ENCODE measurements at regions of chr3 and their contacts with region 1.

Region 1: DNA sequence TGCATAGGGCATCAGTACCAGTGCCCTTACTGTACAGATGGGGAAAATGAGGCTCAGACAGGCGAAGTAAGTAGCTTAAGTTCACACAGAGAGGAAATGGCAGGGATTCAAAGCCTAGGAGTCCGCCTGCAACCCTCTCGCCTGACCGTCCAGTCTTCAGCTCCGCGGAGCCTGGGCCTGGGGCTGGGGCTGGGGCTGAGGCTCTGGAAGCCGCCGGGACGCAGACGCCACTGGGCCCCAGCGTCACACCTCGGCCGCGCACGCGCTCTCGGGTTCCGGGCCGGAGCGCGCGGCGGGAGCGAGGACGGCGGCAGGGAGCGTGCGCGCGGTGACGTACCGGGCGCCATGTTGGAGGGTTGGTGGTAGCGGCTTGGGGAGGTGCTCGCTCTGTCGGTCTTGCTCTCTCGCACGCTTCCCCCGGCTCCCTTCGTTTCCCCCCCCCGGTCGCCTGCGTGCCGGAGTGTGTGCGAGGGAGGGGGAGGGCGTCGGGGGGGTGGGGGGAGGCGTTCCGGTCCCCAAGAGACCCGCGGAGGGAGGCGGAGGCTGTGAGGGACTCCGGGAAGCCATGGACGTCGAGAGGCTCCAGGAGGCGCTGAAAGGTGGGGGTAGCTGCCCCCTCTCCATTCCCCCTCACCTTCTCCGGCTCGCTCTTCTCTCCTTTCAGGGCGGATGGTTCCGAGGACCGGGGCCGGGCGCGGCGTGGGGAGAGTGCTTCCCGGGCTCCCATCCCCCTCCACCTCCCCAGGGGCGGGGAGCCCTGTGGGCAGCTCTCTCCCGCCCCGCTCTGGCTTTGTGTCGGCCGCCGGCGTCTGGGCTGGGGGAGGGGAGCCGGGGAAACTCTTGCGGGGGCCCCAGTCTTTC is at the start of gene PPP4R2:
- DNase-seq: peak; percentile 90 to 94
- H3K4me3 ChIP-seq: peak within 1 kb of the TSS; percentile 91
- H3K4me3 Mint-ChIP-seq: peak within 1 kb of the TSS; percentile 98
- H3K27ac Mint-ChIP-seq: peak within 1 kb of the TSS; percentile 90
- H3K4me1 ChIP-seq: peaks cover 29% of the 10 kb centered on the region
- H3K4me1 Mint-ChIP-seq: peaks cover 25% of the 10 kb centered on the region
- H3K27me3 ChIP-seq: no peaks in the 10 kb centered on the region
- H3K27me3 Mint-ChIP-seq: no peaks in the 10 kb centered on the region
- CTCF ChIP-seq: peak in 1 of 2 experiments; percentile 0
- total RNA-seq, gene PPP4R2: 91.3 and 93.6 TPM in 2 replicates

Region 2: DNA sequence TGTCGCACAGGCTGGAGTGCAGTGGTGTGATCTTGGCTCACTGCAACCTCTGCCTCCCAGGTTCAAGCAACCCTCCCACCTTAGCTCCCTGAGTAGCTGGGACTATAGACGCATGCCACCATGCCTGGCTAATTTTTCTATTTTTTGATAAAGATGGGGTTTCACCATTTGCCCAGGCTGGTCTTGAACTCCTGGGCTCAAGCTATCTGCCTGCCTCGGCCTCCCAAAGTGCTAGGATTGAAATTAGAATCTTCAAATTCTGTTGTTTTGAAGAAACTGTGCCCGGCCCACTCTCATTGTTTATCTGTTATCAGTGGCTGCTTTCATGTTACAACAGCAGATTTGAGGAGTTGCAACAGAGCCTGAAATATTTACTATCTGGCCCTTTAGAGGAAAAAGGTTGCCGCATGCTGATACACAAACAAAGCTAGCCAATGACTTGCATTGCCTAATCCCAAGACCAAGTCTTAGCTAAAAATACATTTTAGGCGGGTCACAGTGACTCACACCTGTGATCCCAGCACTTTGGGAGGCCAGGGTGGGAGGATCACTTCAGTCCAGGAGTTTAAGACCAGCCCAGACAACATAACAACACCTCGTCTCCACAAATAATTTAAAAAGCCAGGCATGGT is 43.3 kb before region 1 on chr3:
- CTCF ChIA-PET with region 1: interaction called, 12 read pairs
- POLR2A ChIA-PET with region 1: interaction called, 4 read pairs
- intact Hi-C with region 1: no loop called
- DNase-seq: peak; percentile 71 to 74
- H3K4me3 ChIP-seq: no peak overlapping the region
- H3K4me3 Mint-ChIP-seq: no peak overlapping the region
- H3K27ac Mint-ChIP-seq: no peak overlapping the region
- H3K4me1 ChIP-seq: peaks cover 49% of the 10 kb centered on the region
- H3K4me1 Mint-ChIP-seq: peaks cover 15% of the 10 kb centered on the region
- H3K27me3 ChIP-seq: no peaks in the 10 kb centered on the region
- H3K27me3 Mint-ChIP-seq: no peaks in the 10 kb centered on the region
- CTCF ChIP-seq: no peak

Region 3: GRCh38 chr3:72973031-72973723 is 23.5 kb before region 1 on chr3:
- CTCF ChIA-PET with region 1: interaction called, 6 read pairs
- POLR2A ChIA-PET with region 1: interaction called, 6 read pairs
- intact Hi-C with region 1: loop called (anchors 1 kb)
- DNase-seq: peak; percentile 90 to 96
- H3K4me3 ChIP-seq: peak overlapping the region; percentile 14; the same call in 1 of the 2 replicates
- H3K4me3 Mint-ChIP-seq: peak overlapping the region; percentile 68
- H3K27ac Mint-ChIP-seq: peak overlapping the region; percentile 88
- H3K4me1 ChIP-seq: peaks cover 37% of the 10 kb centered on the region
- H3K4me1 Mint-ChIP-seq: peaks cover 20% of the 10 kb centered on the region
- H3K27me3 ChIP-seq: no peaks in the 10 kb centered on the region
- H3K27me3 Mint-ChIP-seq: no peaks in the 10 kb centered on the region
- CTCF ChIP-seq: no peak

Region 4: GRCh38 chr3:73056014-73056844 is 59.5 kb after region 1 on chr3:
- CTCF ChIA-PET with region 1: interaction called, 8 read pairs
- POLR2A ChIA-PET with region 1: no interaction called
- intact Hi-C with region 1: loop called (anchors 2 kb)
- DNase-seq: no peak
- H3K4me3 ChIP-seq: no peak overlapping the region
- H3K4me3 Mint-ChIP-seq: no peak overlapping the region
- H3K27ac Mint-ChIP-seq: no peak overlapping the region
- H3K4me1 ChIP-seq: peaks cover 20% of the 10 kb centered on the region
- H3K4me1 Mint-ChIP-seq: peaks cover 21% of the 10 kb centered on the region
- H3K27me3 ChIP-seq: no peaks in the 10 kb centered on the region
- H3K27me3 Mint-ChIP-seq: no peaks in the 10 kb centered on the region
- CTCF ChIP-seq: peak; percentile 30 to 48

Region 5: GRCh38 chr3:73215281-73215680 is 218.6 kb after region 1 on chr3:
- CTCF ChIA-PET with region 1: no interaction called
- POLR2A ChIA-PET with region 1: no interaction called
- intact Hi-C with region 1: no loop called
- DNase-seq: no peak
- H3K4me3 ChIP-seq: no peak overlapping the region
- H3K4me3 Mint-ChIP-seq: no peak overlapping the region
- H3K27ac Mint-ChIP-seq: no peak overlapping the region
- H3K4me1 ChIP-seq: no peaks in the 10 kb centered on the region
- H3K4me1 Mint-ChIP-seq: no peaks in the 10 kb centered on the region
- H3K27me3 ChIP-seq: no peaks in the 10 kb centered on the region
- H3K27me3 Mint-ChIP-seq: no peaks in the 10 kb centered on the region
- CTCF ChIP-seq: no peak

Measured in Caco-2 (cell line).